K562 (cell line): ENCODE measurements at regions of chr4 and their contacts with region 1.

Region 1: GRCh38 chr4:37389967-37390580 is 145.5 kb downstream of the NWD2 start:
- DNase-seq: peak in 3 of 4 experiments; percentile 14 to 59 (median 19)
- ATAC-seq: peak; percentile 75
- H3K4me3 ChIP-seq: no peak overlapping the region
- H3K27ac ChIP-seq: no peak overlapping the region
- H3K4me1 ChIP-seq: no peaks in the 10 kb centered on the region
- H3K27me3 ChIP-seq: no peaks in the 10 kb centered on the region
- CTCF ChIP-seq: peak; percentile 40 to 80 (median 59); a peak in 5 of 6 replicates
- EP300 ChIP-seq: no peak
- POLR2A ChIP-seq: no peak
- RAD21 ChIP-seq: peak; percentile 73 to 79

Region 2: DNA sequence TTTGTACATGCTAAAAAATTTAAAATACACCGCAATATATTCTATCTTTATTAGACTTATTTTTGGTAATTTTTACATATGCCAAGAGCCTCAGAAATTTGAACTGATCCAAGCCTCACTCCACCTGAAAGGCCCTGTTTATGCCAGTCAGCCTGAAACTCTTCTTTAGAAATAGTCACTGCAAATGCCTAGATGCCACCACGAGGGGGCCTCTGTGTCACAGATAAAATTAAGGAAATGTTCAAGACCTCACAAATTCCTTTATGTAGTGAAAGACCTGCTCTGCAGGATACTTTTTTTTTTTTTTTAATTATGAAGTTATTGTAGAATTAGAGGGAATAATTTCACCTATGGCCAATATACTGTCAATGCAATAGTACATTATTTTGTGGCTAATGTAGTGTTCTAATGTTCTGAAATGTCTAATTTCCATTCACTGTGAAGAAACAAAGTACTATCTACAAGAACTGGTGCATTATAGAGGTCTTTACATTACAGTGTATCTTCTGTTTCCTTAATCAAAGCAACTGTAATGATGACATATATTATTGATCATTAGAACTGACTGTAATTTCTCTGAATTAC is 1038.9 kb before region 1 on chr4:
- CTCF ChIA-PET with region 1: interaction called, 7 read pairs
- POLR2A ChIA-PET with region 1: no interaction called
- in situ Hi-C with region 1: loop called (anchors 25 kb)
- intact Hi-C with region 1: loop called (anchors 1 kb)
- DNase-seq: peak; percentile 17 to 52 (median 23)
- ATAC-seq: 0 out of 3 replicates have a peak, but pooled peaks have one; percentile 53
- H3K4me3 ChIP-seq: no peak overlapping the region
- H3K27ac ChIP-seq: no peak overlapping the region
- H3K4me1 ChIP-seq: no peaks in the 10 kb centered on the region
- H3K27me3 ChIP-seq: no peaks in the 10 kb centered on the region
- CTCF ChIP-seq: peak; percentile 38 to 66 (median 44); a peak in 5 of 6 replicates
- EP300 ChIP-seq: no peak
- POLR2A ChIP-seq: no peak
- RAD21 ChIP-seq: peak; percentile 55 to 62

Region 3: GRCh38 chr4:37068580-37068979 is 321.5 kb before region 1 on chr4:
- CTCF ChIA-PET with region 1: no interaction called
- POLR2A ChIA-PET with region 1: no interaction called
- in situ Hi-C with region 1: no loop called
- intact Hi-C with region 1: loop called (anchors 10 kb)
- DNase-seq: peak in 1 of 4 experiments; percentile 14
- ATAC-seq: no peak
- H3K4me3 ChIP-seq: no peak overlapping the region
- H3K27ac ChIP-seq: no peak overlapping the region
- H3K4me1 ChIP-seq: no peaks in the 10 kb centered on the region; a peak in 1 of 5 replicates
- H3K27me3 ChIP-seq: no peaks in the 10 kb centered on the region
- CTCF ChIP-seq: peak; percentile 6 to 36 (median 17); a peak in 2 of 6 replicates
- EP300 ChIP-seq: no peak
- POLR2A ChIP-seq: no peak
- RAD21 ChIP-seq: no peak

Region 4: GRCh38 chr4:37138019-37138653 is 251.9 kb before region 1 on chr4:
- CTCF ChIA-PET with region 1: no interaction called
- POLR2A ChIA-PET with region 1: no interaction called
- in situ Hi-C with region 1: no loop called
- intact Hi-C with region 1: no loop called
- DNase-seq: no peak
- ATAC-seq: no peak
- H3K4me3 ChIP-seq: no peak overlapping the region
- H3K27ac ChIP-seq: no peak overlapping the region
- H3K4me1 ChIP-seq: no peaks in the 10 kb centered on the region
- H3K27me3 ChIP-seq: no peaks in the 10 kb centered on the region
- CTCF ChIP-seq: no peak
- EP300 ChIP-seq: no peak
- POLR2A ChIP-seq: no peak
- RAD21 ChIP-seq: no peak